Sciatic nerve (tissue), 2 donors: ENCODE measurements at regions of chr2 and their contacts with region 1.

Region 1: DNA sequence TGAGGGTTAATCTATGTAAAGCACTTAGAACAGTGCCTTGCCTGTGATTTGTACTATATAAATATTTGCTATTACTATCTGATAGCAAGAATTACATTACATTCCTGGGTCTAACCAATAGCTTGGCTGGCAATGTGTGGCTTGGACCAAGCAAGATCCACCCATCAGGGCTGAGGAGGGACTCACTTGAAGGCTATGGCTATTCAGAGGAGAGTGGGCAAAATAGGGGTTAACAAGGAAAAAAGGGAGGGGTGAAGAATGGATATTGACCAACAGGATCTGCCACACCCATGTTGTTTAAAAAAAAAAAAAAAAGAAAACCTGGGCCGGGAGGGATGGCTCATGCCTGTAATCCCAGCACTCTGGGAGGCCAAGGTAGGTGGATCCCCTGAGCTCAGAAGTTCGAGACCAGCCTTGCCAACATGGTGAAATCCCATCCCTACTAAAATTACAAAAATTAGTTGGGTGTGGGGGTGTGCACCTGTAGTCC is 20.0 kb upstream of the TMBIM1 start:
- DNase-seq: no peak
- ATAC-seq: no peak

Region 2: GRCh38 chr2:218342837-218343236 is 30.5 kb after region 1 on chr2:
- intact Hi-C with region 1: loop called (anchors 1 kb)
- DNase-seq: no peak
- ATAC-seq: no peak

Region 3: DNA sequence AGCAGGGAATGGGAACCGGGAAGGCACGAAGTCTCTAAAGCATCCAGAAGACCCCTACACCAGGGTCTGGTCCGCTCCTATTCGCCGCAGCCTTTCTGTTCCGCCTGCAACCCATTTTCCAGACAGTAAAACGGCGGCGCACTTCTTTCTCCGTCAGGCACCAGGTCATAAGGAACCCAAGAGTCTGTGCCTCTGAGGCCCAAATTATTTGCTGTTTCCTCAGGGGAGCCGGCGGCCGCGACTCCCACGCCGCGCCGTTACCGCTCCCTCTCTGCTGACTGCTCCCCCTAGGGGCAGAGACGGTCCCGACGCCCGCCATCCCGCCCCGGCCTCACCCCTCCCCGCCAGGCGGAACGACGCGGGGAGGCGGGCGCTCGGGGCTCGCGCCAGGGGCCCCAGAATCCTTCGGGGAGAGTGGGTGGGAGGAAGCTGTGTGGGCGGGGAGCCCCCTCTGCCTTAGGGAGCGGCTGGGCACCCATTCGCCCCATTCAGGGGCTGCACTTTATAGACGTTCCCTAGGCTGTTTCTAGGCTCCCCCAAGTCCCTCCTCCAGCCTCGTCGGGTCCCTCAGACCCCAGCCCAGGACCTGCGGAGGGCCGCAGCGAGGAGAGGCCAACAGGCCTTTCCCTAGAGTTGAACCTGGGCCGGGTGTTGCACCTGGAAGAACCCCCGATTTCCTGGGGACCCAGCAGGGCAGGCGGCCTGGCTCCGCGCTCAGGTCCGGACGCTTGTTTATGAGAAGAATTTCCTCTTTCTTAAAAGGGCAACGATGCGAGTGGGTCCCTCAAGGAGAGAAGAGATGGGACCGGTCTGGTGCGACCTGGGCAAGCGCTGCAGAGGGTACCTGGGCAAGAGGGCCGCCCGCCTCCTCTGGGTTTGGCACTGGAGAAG is 83.7 kb after region 1 on chr2:
- intact Hi-C with region 1: loop called (anchors 5 kb)
- DNase-seq: peak; percentile 96
- ATAC-seq: peak; percentile 83

Region 4: DNA sequence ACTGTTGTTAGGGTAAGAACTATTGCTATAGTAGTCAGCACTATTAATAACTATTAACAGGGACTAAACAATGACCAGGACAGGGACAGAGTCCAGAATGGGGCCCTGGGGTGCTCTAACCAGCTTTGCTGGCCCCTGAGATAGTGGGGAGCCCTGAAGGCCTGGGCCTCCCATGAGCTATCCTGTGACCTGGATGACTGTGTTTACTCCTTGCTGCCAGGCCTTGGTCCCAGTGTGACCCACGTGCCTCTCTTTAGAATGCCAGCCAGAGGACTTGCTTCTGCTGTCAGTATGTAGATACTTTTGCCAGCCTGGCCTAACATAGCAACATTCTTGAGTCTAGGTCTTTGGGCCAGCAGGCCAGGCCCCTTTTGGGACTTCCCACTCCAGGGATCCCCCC is 658.6 kb after region 1 on chr2:
- intact Hi-C with region 1: no loop called
- DNase-seq: no peak
- ATAC-seq: no peak